SK-N-SH (cell line): ENCODE measurements at regions of chr1 and their contacts with region 1.

Region 1: GRCh38 chr1:6554031-6554906 is at the start of gene NOL9:
- DNase-seq: peak; percentile 99
- H3K4me3 ChIP-seq: peak within 1 kb of the TSS; percentile 82 to 86
- H3K27ac ChIP-seq: peak within 1 kb of the TSS; percentile 46 to 48; a peak in 3 of 4 replicates
- H3K4me1 ChIP-seq: peaks cover 0 to 14% of the 10 kb centered on the region in 2 experiments; a peak in 1 of 4 replicates
- H3K27me3 ChIP-seq: no peaks in the 10 kb centered on the region
- CTCF ChIP-seq: peak; percentile 77
- EP300 ChIP-seq: peak in 1 of 2 experiments; percentile 8; a peak in 1 of 4 replicates
- RAD21 ChIP-seq: peak; percentile 61
- polyA plus RNA-seq, gene NOL9: 7.1 and 7.9 TPM in 2 replicates

Region 2: GRCh38 chr1:6489799-6490180 is 64.5 kb before region 1 on chr1:
- CTCF ChIA-PET with region 1: interaction called, 41 read pairs
- POLR2A ChIA-PET with region 1: no interaction called
- DNase-seq: peak; percentile 95
- H3K4me3 ChIP-seq: peak overlapping the region; percentile 75 to 76
- H3K27ac ChIP-seq: peak overlapping the region; percentile 74 to 79; a peak in 2 of 4 replicates
- H3K4me1 ChIP-seq: peaks cover 0 to 53% of the 10 kb centered on the region in 2 experiments; a peak in 1 of 4 replicates
- H3K27me3 ChIP-seq: no peaks in the 10 kb centered on the region
- CTCF ChIP-seq: peak; percentile 78
- EP300 ChIP-seq: no peak
- RAD21 ChIP-seq: peak; percentile 60

Region 3: GRCh38 chr1:6513320-6513801 is 40.9 kb before region 1 on chr1:
- CTCF ChIA-PET with region 1: interaction called, 12 read pairs
- POLR2A ChIA-PET with region 1: no interaction called
- DNase-seq: no peak
- H3K4me3 ChIP-seq: no peak overlapping the region
- H3K27ac ChIP-seq: peak overlapping the region in 1 of 2 experiments; percentile 93; a peak in 2 of 4 replicates
- H3K4me1 ChIP-seq: peaks cover 0 to 65% of the 10 kb centered on the region in 2 experiments; a peak in 2 of 4 replicates
- H3K27me3 ChIP-seq: no peaks in the 10 kb centered on the region
- CTCF ChIP-seq: no peak
- EP300 ChIP-seq: no peak
- RAD21 ChIP-seq: no peak

Region 4: GRCh38 chr1:6535214-6535613 is 19.1 kb before region 1 on chr1:
- CTCF ChIA-PET with region 1: interaction called, 19 read pairs
- POLR2A ChIA-PET with region 1: no interaction called
- DNase-seq: no peak
- H3K4me3 ChIP-seq: no peak overlapping the region
- H3K27ac ChIP-seq: no peak overlapping the region
- H3K4me1 ChIP-seq: no peaks in the 10 kb centered on the region
- H3K27me3 ChIP-seq: no peaks in the 10 kb centered on the region
- CTCF ChIP-seq: no peak
- EP300 ChIP-seq: no peak
- RAD21 ChIP-seq: no peak

Region 5: DNA sequence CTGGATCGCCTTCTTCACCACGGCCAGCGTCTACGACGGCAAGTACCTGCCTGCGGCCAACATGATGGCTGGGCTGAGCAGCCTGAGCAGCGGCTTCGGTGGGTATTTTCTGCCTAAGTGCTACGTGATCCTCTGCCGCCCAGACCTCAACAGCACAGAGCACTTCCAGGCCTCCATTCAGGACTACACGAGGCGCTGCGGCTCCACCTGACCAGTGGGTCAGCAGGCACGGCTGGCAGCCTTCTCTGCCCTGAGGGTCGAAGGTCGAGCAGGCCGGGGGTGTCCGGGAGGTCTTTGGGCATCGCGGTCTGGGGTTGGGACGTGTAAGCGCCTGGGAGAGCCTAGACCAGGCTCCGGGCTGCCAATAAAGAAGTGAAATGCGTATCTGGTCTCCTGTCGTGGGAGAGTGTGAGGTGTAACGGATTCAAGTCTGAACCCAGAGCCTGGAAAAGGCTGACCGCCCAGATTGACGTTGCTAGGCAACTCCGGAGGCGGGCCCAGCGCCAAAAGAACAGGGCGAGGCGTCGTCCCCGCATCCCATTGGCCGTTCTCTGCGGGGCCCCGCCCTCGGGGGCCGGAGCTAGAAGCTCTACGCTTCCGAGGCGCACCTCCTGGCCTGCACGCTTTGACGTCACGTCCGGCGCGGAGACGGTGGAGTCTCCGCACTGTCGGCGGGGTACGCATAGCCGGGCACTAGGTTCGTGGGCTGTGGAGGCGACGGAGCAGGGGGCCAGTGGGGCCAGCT is 25.3 kb after region 1 on chr1 and contains the start of gene ZBTB48:
- CTCF ChIA-PET with region 1: interaction called, 68 read pairs
- POLR2A ChIA-PET with region 1: interaction called, 3 read pairs
- DNase-seq: peak; percentile 100
- H3K4me3 ChIP-seq: peak within 1 kb of the TSS; percentile 73 to 84
- H3K27ac ChIP-seq: peak within 1 kb of the TSS; percentile 76 to 88
- H3K4me1 ChIP-seq: peaks cover 14 to 32% of the 10 kb centered on the region in 2 experiments; a peak in 2 of 4 replicates
- H3K27me3 ChIP-seq: no peaks in the 10 kb centered on the region
- CTCF ChIP-seq: no peak
- EP300 ChIP-seq: no peak
- RAD21 ChIP-seq: no peak
- polyA plus RNA-seq, gene ZBTB48: 28.8 and 31.2 TPM in 2 replicates

Region 6: GRCh38 chr1:6624710-6625583 is 70.7 kb after region 1 on chr1 and contains the start of gene THAP3:
- CTCF ChIA-PET with region 1: interaction called, 10 read pairs
- POLR2A ChIA-PET with region 1: no interaction called
- DNase-seq: peak; percentile 98
- H3K4me3 ChIP-seq: peak within 1 kb of the TSS; percentile 72 to 82
- H3K27ac ChIP-seq: peak within 1 kb of the TSS; percentile 59 to 77
- H3K4me1 ChIP-seq: peaks cover 0 to 5% of the 10 kb centered on the region in 2 experiments; a peak in 1 of 4 replicates
- H3K27me3 ChIP-seq: no peaks in the 10 kb centered on the region
- CTCF ChIP-seq: no peak
- EP300 ChIP-seq: no peak
- RAD21 ChIP-seq: no peak
- polyA plus RNA-seq, gene THAP3: 10.0 and 11.1 TPM in 2 replicates